ENCODE measurements at regions of chr22 and their contacts with region 1.

Region 1: DNA sequence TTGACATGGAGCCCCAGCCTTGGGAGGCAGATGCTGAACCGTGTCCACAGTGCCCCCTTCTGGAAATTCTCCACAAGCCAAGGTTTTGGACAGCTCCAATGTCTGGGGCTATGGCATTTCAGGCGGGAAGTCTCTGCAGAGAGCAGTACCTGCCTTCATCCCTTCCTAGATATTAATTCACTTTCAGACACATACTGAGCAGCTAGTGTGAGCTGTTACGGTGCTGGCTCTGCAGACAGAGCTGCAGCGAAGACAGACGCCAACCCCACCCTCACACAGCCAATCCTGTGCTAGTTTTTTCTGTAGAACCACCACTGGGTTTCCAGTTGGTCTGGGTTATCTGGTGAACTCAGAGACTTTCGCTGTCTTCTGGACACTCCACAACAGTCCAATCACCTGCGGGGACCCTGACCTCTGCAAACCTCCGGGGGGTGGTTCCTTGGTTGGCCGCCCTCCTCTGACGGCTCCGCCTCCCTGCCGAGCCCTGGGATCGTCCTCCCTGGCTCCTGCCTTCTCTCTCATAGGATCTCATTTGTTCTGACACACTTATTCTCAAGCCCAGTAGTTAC is 9.1 kb downstream of the LMF2 start:
- DNase-seq: peak in 1 of 5 donors; percentile 60
- ATAC-seq: peak; percentile 49 to 86 (median 78)
- H3K4me3 ChIP-seq: no peak overlapping the region
- H3K27ac ChIP-seq: no peak overlapping the region
- H3K4me1 ChIP-seq: peaks cover 0 to 6% (median 0%) of the 10 kb centered on the region in 12 donors
- H3K27me3 ChIP-seq: no peaks in the 10 kb centered on the region
- CTCF ChIP-seq: peak; percentile 34 to 69 (median 55)
- POLR2A ChIP-seq: no peak

Region 2: GRCh38 chr22:50244420-50245213 is 253.8 kb before region 1 on chr22 and contains the start of gene TUBGCP6:
- intact Hi-C with region 1: loop called in 3 of 10 experiments (anchors 10 kb)
- DNase-seq: peak; percentile 96 to 98 (median 96)
- ATAC-seq: peak; percentile 88 to 96 (median 93)
- H3K4me3 ChIP-seq: peak within 1 kb of the TSS; percentile 51 to 99 (median 88)
- H3K27ac ChIP-seq: peak within 1 kb of the TSS; percentile 72 to 96 (median 88)
- H3K4me1 ChIP-seq: peaks cover 13 to 62% (median 44%) of the 10 kb centered on the region in 12 donors
- H3K27me3 ChIP-seq: no peaks in the 10 kb centered on the region
- CTCF ChIP-seq: peak in 7 of 12 donors; percentile 6 to 39 (median 24)
- POLR2A ChIP-seq: peak in 1 of 2 donors; percentile 81
- total RNA-seq, gene TUBGCP6: 14.1 to 28.8 (median 18.1) TPM

Region 3: DNA sequence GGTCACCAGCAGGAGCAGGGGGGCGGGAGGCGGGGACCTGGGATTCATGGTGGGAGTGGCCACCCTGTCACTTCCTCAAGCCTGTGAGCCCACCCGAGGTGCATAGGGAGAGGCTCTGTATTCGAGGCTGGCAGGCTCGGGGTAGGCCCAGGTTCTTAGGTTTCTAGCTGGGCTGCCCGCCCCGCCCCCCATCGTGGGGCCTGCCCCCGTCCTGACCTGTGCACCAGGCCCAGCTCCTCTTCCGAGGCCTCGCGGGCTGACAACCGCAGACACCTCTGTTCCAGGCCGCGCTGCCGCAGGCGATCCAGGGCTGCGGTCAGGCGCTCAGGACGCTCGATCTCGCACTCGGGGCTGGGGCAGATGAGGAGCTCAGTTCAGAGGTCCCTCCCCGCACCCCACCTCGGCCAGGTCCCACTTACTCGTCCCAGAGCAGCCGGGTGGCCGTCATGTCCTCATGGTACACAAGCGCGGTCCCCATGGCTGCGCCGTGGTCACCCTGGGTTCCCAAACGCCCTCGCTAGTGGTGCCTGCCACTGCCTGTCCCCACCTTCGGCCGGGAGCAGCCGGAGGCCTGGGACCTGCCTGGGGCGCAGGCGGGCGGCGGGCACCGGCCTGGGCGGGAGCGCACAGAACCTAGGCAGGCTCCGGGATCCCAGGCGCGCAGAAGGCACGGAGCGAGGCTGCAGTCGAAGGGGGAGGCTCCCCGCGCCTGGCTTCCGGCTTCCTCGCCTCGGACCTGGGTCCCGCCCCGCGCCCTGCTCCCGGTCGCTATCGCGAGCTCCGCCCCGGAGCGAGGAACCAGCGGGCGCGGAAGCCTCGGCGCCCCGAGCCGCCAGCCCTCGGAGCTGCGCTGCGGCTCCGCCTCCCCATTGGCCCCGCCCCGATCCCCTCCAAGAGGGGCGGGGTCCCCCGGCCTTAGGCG is 247.6 kb before region 1 on chr22 and contains the start of gene HDAC10:
- intact Hi-C with region 1: loop called in 6 of 10 experiments (anchors 5 to 10 kb)
- DNase-seq: peak; percentile 75 to 94 (median 85)
- ATAC-seq: peak; percentile 25 to 80 (median 72)
- H3K4me3 ChIP-seq: peak within 1 kb of the TSS; percentile 53 to 83 (median 69)
- H3K27ac ChIP-seq: peak within 1 kb of the TSS in 11 of 12 donors; percentile 53 to 81 (median 65)
- H3K4me1 ChIP-seq: peaks cover 5 to 43% (median 27%) of the 10 kb centered on the region in 12 donors
- H3K27me3 ChIP-seq: no peaks in the 10 kb centered on the region
- CTCF ChIP-seq: no peak
- POLR2A ChIP-seq: peak in 1 of 2 donors; percentile 60
- total RNA-seq, gene HDAC10: 6.8 to 22.4 (median 10.9) TPM

Region 4: DNA sequence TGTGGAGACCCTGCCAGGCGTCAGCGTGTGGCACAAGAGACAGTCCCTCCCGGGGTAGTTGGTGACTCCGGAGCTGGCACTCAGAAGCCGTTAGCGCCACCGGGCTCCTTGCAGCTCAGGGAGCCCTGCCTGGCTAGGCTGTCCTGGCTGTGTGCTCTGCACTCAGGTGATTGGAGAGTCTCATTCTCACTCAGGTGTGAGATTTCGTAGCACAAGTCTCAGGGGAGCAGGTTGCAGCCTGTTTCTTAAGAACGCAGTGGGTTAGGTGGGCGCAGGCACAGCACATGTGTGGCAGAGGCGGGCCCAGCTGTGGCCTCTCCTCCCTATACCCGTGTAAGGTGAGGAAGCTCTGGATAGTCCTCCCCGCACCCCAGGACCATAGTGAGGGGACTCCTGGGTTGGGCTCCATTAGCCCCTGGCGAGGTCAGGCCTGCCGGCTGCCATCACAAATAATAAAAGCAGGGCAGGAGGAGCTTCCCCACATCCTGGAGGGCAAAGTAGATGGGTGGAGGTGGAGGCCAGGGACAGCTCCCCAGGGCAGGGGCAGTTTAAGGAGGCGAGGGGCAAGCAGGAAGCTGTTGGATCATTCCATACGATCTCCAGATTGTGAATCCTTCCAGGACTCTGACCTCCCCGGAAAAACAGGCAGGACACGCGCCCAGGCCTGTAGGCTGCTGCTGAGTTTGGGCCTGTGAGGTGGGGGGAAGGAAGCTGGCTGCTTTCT is 63.0 kb before region 1 on chr22:
- intact Hi-C with region 1: loop called in 1 of 10 experiments (anchors 10 kb)
- DNase-seq: peak in 1 of 5 donors; percentile 54
- ATAC-seq: no peak
- H3K4me3 ChIP-seq: no peak overlapping the region
- H3K27ac ChIP-seq: no peak overlapping the region
- H3K4me1 ChIP-seq: no peaks in the 10 kb centered on the region
- H3K27me3 ChIP-seq: no peaks in the 10 kb centered on the region
- CTCF ChIP-seq: no peak
- POLR2A ChIP-seq: no peak

Region 5: DNA sequence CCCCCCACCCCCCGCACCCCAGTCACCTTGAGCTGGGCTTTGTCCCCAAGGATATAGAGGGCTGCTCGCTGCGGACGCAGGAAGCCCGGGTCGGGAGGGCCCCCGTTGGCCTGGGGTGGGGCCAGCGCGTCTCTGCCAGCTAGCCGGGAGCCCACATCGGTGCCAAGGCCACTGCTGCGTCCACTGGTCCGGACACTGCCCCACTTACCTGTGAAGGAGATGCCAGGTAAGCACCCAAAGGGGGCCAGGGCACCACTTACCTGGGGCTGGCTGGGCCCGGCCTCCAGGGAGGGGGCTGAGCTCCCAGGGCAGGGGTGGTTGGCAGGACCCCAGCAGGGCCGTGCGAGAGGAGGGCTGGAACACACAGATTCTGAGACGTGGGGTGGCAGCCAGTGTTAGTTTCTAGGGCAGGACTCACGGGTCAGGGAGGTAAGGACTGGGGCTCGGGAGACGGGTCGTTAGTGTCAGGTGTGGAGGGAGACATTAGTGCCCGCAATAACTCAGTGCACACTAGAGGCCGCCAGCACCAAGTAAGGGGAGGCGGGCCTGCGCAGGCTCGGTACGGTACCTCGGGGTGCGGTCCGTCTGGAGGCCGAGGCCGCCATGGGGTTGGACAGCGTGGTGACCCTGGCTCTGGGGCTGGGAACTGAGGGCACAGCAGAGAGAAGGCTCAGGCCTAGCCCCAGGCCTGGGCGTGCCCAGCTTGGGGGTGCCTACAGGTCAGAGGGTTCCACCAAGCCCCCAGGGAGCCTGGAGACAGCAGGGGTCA is 41.8 kb before region 1 on chr22:
- intact Hi-C with region 1: no loop called
- DNase-seq: no peak
- ATAC-seq: no peak
- H3K4me3 ChIP-seq: no peak overlapping the region
- H3K27ac ChIP-seq: no peak overlapping the region
- H3K4me1 ChIP-seq: no peaks in the 10 kb centered on the region
- H3K27me3 ChIP-seq: no peaks in the 10 kb centered on the region
- CTCF ChIP-seq: no peak
- POLR2A ChIP-seq: no peak